A549 (cell line): ENCODE measurements at regions of chr10 and their contacts with region 1.

Region 1: DNA sequence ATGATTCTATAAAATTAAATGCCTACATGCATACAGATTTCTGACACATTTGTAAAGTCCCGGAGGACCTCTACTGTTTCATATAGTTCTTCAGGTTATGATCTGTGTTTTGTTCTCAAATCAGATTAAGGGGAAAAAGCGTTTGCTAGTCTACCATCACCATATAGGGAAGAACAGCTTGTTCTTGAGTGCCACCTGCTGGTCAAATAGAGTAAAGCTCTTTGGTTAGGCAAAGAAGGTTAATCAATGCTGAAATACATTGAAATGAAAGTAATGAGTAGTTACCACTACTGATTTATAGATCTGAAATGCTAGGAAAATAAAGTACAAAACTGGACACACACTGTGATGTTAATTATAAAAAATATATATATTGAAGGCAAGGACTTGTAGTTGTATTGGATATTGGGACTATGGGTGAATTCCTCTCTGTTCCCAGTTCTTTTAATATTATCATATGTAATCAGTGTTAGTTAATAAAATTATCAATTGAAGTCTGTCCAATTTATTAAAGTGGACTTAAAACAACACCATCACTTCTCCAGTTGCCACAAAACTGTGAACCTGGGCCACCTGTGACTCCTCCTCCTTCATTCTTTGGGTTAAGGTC is 72.6 kb upstream of the PDLIM1 start:
- DNase-seq: peak; percentile 70 to 76
- ATAC-seq: peak; percentile 62 to 87; a peak in 3 of 6 replicates
- H3K4me3 ChIP-seq: no peak overlapping the region
- H3K27ac ChIP-seq: peak overlapping the region; percentile 9 to 23; a peak in 1 of 6 replicates
- H3K4me1 ChIP-seq: peaks cover 14% of the 10 kb centered on the region
- CTCF ChIP-seq: peak; percentile 95
- EP300 ChIP-seq: no peak
- POLR2A ChIP-seq: no peak
- RAD21 ChIP-seq: peak; percentile 98 to 99

Region 2: DNA sequence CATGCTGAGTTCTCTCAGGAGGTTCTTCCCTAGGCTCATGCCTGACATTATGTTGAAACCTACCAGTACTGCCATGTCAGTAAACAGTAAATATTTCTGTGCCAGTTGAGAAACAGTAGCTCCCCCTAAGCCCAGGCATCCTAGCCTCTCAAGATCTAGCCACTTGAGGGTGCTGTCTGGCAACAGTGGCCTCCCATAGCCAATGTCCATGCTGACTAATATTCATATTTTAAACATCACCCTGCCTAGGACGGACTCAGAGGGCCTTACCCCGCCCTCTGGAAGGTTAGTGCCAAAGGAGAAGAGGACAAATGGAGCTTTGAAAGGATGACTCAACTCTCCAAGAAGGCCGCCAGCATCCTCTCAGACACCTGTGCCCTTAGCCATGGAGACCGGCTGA is 161.7 kb before region 1 on chr10:
- CTCF ChIA-PET with region 1: interaction called, 71 read pairs
- POLR2A ChIA-PET with region 1: interaction called, 4 read pairs
- DNase-seq: peak; percentile 60 to 71
- ATAC-seq: peak; percentile 95 to 99
- H3K4me3 ChIP-seq: no peak overlapping the region
- H3K27ac ChIP-seq: peak overlapping the region in 1 of 2 experiments; percentile 30; a peak in 1 of 6 replicates
- H3K4me1 ChIP-seq: no peaks in the 10 kb centered on the region
- CTCF ChIP-seq: peak; percentile 52
- EP300 ChIP-seq: no peak
- POLR2A ChIP-seq: no peak
- RAD21 ChIP-seq: peak; percentile 73 to 91

Region 3: GRCh38 chr10:95279042-95279820 is 84.2 kb before region 1 on chr10:
- CTCF ChIA-PET with region 1: interaction called, 16 read pairs
- POLR2A ChIA-PET with region 1: no interaction called
- DNase-seq: peak; percentile 46 to 47
- ATAC-seq: peak; percentile 77 to 78; a peak in 5 of 6 replicates
- H3K4me3 ChIP-seq: peak overlapping the region; percentile 10; the same call in 1 of the 3 replicates
- H3K27ac ChIP-seq: peak overlapping the region; percentile 78 to 83
- H3K4me1 ChIP-seq: peaks cover 92% of the 10 kb centered on the region
- CTCF ChIP-seq: no peak
- EP300 ChIP-seq: no peak
- POLR2A ChIP-seq: no peak
- RAD21 ChIP-seq: 0 out of 5 replicates have a peak, but pooled peaks of 1 of the 2 experiments have one; percentile 1

Region 4: GRCh38 chr10:95333997-95334804 is 29.2 kb before region 1 on chr10:
- CTCF ChIA-PET with region 1: interaction called, 27 read pairs
- POLR2A ChIA-PET with region 1: no interaction called
- DNase-seq: peak; percentile 35 to 45
- ATAC-seq: peak; percentile 62 to 74; a peak in 4 of 6 replicates
- H3K4me3 ChIP-seq: no peak overlapping the region
- H3K27ac ChIP-seq: peak overlapping the region; percentile 46 to 75; a peak in 5 of 6 replicates
- H3K4me1 ChIP-seq: peaks cover 47% of the 10 kb centered on the region
- CTCF ChIP-seq: no peak
- EP300 ChIP-seq: no peak
- POLR2A ChIP-seq: no peak
- RAD21 ChIP-seq: no peak

Region 5: DNA sequence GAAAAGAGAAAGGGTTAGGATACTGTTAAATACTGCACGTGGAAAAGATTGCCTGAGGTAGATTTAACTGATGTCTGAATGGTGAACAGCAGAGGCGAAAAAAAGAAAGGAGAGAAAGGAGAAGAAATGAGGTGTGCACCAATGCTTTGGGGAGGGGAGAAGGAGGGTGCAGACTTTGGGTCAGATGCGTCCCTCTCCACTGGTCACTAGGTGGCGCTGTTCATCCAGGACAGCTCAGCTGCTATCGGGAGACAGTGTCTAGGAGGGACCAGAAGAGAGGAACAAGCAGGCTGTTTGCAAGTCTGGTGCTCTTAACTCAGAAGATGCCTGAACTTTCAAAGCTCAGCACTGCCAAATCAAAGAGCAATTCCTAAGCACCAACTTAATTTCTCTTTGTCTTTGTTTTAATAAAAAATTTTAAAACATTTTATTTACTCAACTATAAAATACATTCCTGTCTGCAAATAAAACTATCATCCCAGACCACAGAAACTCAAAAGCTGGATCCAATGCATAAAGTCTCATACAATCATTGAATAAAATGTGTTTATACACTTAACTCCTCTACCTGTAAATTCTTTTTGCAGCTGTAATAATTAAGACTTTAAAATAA is 11.3 kb after region 1 on chr10:
- CTCF ChIA-PET with region 1: interaction called, 72 read pairs
- POLR2A ChIA-PET with region 1: no interaction called
- DNase-seq: peak; percentile 77 to 84
- ATAC-seq: peak; percentile 97 to 99
- H3K4me3 ChIP-seq: no peak overlapping the region
- H3K27ac ChIP-seq: no peak overlapping the region
- H3K4me1 ChIP-seq: no peaks in the 10 kb centered on the region
- CTCF ChIP-seq: peak; percentile 91
- EP300 ChIP-seq: no peak
- POLR2A ChIP-seq: no peak
- RAD21 ChIP-seq: peak; percentile 85 to 94